ENCODE measurements at regions of chr5 and their contacts with region 1.

Region 1: GRCh38 chr5:168047043-168047668 is 244.3 kb upstream of the WWC1 start:
- DNase-seq: peak; percentile 47 to 64
- H3K4me3 ChIP-seq: no peak overlapping the region
- H3K27ac ChIP-seq: no peak overlapping the region
- H3K4me1 ChIP-seq: no peaks in the 10 kb centered on the region
- H3K27me3 ChIP-seq: peaks cover 18% of the 10 kb centered on the region; the same call in 1 of the 2 replicates
- CTCF ChIP-seq: peak; percentile 62

Region 2: GRCh38 chr5:166961039-166961438 is 1086.1 kb before region 1 on chr5:
- CTCF ChIA-PET with region 1: no interaction called
- POLR2A ChIA-PET with region 1: no interaction called
- intact Hi-C with region 1: loop called (anchors 5 kb)
- DNase-seq: no peak
- H3K4me3 ChIP-seq: no peak overlapping the region
- H3K27ac ChIP-seq: no peak overlapping the region
- H3K4me1 ChIP-seq: no peaks in the 10 kb centered on the region
- H3K27me3 ChIP-seq: 0 out of 2 replicates have a peak, but pooled peaks cover 3% of the 10 kb centered on the region
- CTCF ChIP-seq: peak; percentile 53

Region 3: GRCh38 chr5:167478188-167478587 is 569.0 kb before region 1 on chr5:
- CTCF ChIA-PET with region 1: no interaction called
- POLR2A ChIA-PET with region 1: no interaction called
- intact Hi-C with region 1: no loop called
- DNase-seq: no peak
- H3K4me3 ChIP-seq: no peak overlapping the region
- H3K27ac ChIP-seq: no peak overlapping the region
- H3K4me1 ChIP-seq: no peaks in the 10 kb centered on the region
- H3K27me3 ChIP-seq: no peaks in the 10 kb centered on the region
- CTCF ChIP-seq: no peak

Region 4: GRCh38 chr5:167582283-167582682 is 464.9 kb before region 1 on chr5:
- CTCF ChIA-PET with region 1: interaction called, 3 read pairs
- POLR2A ChIA-PET with region 1: no interaction called
- intact Hi-C with region 1: loop called (anchors 1 kb)
- DNase-seq: no peak
- H3K4me3 ChIP-seq: no peak overlapping the region
- H3K27ac ChIP-seq: no peak overlapping the region
- H3K4me1 ChIP-seq: no peaks in the 10 kb centered on the region
- H3K27me3 ChIP-seq: peaks cover 5% of the 10 kb centered on the region
- CTCF ChIP-seq: peak; percentile 54

Region 5: DNA sequence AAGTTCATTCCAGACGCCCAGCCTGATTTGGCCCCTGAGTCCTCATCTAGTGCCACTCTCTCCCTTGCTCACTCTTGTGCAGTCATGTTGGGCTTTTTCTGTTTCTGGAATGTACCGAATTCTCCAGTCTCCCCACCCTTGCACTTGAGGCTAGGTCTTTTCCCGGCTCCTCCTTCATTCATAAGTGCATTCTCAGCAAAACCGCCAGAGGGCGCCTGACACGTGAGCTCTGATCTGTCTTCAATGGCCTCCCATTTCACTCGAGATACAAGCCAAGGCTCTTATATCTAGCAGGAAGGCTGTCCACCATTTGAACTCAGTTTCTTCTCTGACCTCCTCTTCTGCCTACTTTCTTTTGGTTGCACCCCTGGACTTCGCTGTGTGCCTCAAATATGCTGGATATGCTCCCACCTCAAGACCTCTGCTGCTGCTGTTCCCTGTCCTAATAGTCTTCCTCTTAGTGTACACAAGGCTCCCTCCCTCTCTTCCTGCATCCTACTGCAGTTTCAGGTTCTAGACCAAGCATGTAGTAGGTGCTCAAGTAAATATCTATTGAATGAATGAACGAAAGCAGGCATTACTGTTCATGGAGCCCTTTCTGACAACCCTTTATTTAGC is 323.8 kb before region 1 on chr5:
- CTCF ChIA-PET with region 1: no interaction called
- POLR2A ChIA-PET with region 1: no interaction called
- intact Hi-C with region 1: loop called (anchors 2 kb)
- DNase-seq: peak; percentile 66 to 70
- H3K4me3 ChIP-seq: no peak overlapping the region
- H3K27ac ChIP-seq: no peak overlapping the region
- H3K4me1 ChIP-seq: 0 out of 2 replicates have a peak, but pooled peaks cover 5% of the 10 kb centered on the region
- H3K27me3 ChIP-seq: no peaks in the 10 kb centered on the region
- CTCF ChIP-seq: peak; percentile 93

Region 6: DNA sequence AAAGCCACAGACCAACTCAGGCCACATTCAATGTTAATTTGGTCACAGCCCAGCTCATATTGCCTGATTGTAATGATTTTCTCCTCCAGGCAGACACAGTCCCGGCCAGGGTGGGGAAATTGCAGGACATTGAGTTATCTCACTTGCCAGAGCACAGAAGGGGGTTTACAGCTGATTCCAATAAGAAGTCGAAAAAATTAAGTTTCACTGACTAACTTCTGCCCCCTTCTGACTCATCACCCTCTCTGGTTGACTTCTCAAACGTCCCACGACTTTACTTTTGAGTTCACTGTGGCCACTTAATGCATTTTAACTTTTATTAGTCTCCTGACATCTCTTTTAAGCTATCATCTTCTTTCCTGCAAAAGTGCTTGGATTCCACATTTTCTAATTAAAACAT is 77.2 kb before region 1 on chr5:
- CTCF ChIA-PET with region 1: no interaction called
- POLR2A ChIA-PET with region 1: no interaction called
- intact Hi-C with region 1: no loop called
- DNase-seq: peak in 1 of 2 experiments; percentile 26
- H3K4me3 ChIP-seq: no peak overlapping the region
- H3K27ac ChIP-seq: no peak overlapping the region
- H3K4me1 ChIP-seq: no peaks in the 10 kb centered on the region
- H3K27me3 ChIP-seq: no peaks in the 10 kb centered on the region
- CTCF ChIP-seq: no peak

Region 7: DNA sequence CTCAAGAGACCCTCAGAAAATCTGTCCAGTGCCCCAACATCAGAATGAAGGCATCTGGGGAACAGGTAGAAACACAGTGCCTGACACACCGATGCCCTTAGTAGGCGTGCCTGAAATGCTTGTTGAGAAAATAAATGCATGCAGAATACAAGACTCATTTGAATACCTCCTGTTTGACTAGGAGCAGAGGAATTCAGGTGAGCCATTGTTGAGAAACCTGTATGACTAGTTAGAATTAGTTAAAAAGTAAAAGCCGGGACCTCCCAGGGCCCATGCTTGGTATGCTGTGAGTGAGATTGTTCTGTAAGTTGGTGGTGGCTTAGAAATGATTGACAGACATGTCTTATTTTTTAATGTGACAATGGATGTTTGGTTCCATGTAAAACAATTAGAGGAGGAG is 299.3 kb after region 1 on chr5:
- CTCF ChIA-PET with region 1: no interaction called
- POLR2A ChIA-PET with region 1: no interaction called
- intact Hi-C with region 1: no loop called
- DNase-seq: peak; percentile 68 to 96
- H3K4me3 ChIP-seq: peak overlapping the region; percentile 27; the same call in 1 of the 2 replicates
- H3K27ac ChIP-seq: peak overlapping the region; percentile 71
- H3K4me1 ChIP-seq: peaks cover 83% of the 10 kb centered on the region
- H3K27me3 ChIP-seq: no peaks in the 10 kb centered on the region
- CTCF ChIP-seq: no peak

Measured in PC-9 (cell line).